ENCODE measurements at regions of chr10 and their contacts with region 1.

Region 1: GRCh38 chr10:60434418-60435046 is 44.9 kb upstream of the ANK3 start:
- H3K4me3 Mint-ChIP-seq: no peak overlapping the region
- H3K27ac Mint-ChIP-seq: no peak overlapping the region
- H3K4me1 Mint-ChIP-seq: no peaks in the 10 kb centered on the region
- H3K27me3 Mint-ChIP-seq: no peaks in the 10 kb centered on the region

Region 2: DNA sequence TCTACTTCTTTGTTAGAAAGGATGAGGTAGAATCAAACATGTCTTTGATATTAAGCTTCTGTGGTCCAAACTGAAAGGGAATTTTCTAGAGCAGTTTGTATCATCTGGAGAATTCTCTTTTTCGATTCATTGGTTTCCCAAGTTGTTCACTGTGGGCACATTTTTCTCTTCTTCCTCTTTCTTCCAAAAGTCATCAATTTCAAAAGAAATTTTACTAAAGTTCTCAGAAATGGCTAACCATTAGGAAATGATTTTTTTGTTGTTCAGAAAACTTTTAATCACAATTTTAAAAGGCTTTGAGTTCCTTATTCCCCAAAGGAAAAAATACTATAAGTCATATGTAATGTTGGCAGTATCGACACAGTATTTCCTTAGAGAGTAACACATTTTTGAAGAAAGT is 499.8 kb before region 1 on chr10:
- intact Hi-C with region 1: no loop called
- H3K4me3 Mint-ChIP-seq: no peak overlapping the region
- H3K27ac Mint-ChIP-seq: no peak overlapping the region
- H3K4me1 Mint-ChIP-seq: peaks cover 14% of the 10 kb centered on the region
- H3K27me3 Mint-ChIP-seq: no peaks in the 10 kb centered on the region

Region 3: GRCh38 chr10:60099998-60100747 is 334.4 kb before region 1 on chr10:
- intact Hi-C with region 1: loop called (anchors 2 kb)
- H3K4me3 Mint-ChIP-seq: no peak overlapping the region
- H3K27ac Mint-ChIP-seq: no peak overlapping the region
- H3K4me1 Mint-ChIP-seq: no peaks in the 10 kb centered on the region
- H3K27me3 Mint-ChIP-seq: no peaks in the 10 kb centered on the region

Region 4: DNA sequence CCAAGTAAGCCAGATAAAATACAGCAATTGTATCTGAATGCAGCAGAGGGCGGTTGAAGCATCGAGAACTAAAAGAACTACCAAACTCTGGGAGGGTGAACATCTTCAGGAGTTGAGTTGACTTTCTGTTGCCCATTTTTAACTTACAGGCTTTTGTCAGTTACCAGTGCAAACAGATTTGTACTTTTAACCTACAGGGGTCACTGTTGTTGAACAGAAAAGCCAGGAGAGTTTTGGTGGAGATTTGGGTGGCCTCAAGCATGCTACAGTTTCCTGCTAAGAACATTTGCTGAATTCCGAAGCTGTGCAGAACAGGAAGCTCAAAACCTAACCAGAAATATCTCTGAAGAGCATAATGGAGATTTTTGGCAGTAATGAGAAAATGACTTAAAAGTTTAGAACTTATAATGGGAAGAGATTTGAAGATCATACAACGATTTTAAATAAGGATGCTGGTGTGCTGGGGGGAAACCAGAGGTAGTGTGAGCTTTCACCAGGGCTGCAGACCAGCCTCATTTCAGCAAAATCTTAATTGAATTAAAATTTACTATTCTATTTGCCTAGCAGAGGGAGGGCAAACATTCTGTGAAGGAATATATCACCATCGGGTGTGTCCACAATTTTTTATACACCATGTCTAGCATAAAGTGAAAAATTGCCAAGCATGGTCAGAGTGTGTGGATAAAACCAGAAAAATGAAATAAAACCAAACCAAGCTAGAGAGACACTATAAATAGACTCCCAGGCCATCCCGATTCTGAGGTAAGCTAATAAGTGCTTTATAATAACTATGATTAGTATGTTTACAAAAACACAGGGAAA is 319.6 kb before region 1 on chr10:
- intact Hi-C with region 1: loop called (anchors 2 kb)
- H3K4me3 Mint-ChIP-seq: no peak overlapping the region
- H3K27ac Mint-ChIP-seq: no peak overlapping the region
- H3K4me1 Mint-ChIP-seq: no peaks in the 10 kb centered on the region
- H3K27me3 Mint-ChIP-seq: no peaks in the 10 kb centered on the region

Region 5: GRCh38 chr10:60208676-60209269 is 225.8 kb before region 1 on chr10:
- intact Hi-C with region 1: loop called (anchors 1 kb)
- H3K4me3 Mint-ChIP-seq: no peak overlapping the region
- H3K27ac Mint-ChIP-seq: no peak overlapping the region
- H3K4me1 Mint-ChIP-seq: peaks cover 14% of the 10 kb centered on the region
- H3K27me3 Mint-ChIP-seq: no peaks in the 10 kb centered on the region

Region 6: GRCh38 chr10:60358282-60358681 is 76.2 kb before region 1 on chr10:
- intact Hi-C with region 1: no loop called
- H3K4me3 Mint-ChIP-seq: no peak overlapping the region
- H3K27ac Mint-ChIP-seq: no peak overlapping the region
- H3K4me1 Mint-ChIP-seq: no peaks in the 10 kb centered on the region
- H3K27me3 Mint-ChIP-seq: peaks cover 2% of the 10 kb centered on the region